OCI-LY7 (cell line): ENCODE measurements at regions of chr10 and their contacts with region 1.

Region 1: GRCh38 chr10:12484941-12485805 is 135.8 kb downstream of the CAMK1D start:
- DNase-seq: peak; percentile 86
- H3K4me3 ChIP-seq: peak overlapping the region; percentile 62
- H3K27ac ChIP-seq: peak overlapping the region; percentile 87
- H3K4me1 ChIP-seq: peaks cover 39% of the 10 kb centered on the region
- CTCF ChIP-seq: peak; percentile 78

Region 2: DNA sequence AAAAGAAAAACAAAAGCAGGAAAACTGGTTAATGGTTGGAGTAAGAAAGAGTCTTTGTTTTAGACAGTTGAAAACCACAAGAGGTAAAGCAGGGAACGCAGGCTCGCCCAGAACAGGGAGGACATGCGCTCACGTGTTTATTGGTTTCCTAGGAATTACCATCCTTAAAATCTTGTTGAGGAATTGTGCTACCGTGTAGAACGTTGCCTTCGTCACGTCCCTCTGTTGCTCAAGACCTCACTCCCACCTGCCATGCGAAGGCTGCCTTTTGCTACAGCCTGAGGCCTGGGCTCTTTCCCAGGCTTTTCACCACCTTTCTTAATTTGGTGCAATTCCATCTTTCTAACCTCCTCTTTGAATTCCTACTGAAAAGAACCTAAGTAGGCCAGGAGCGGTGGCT is 197.4 kb before region 1 on chr10:
- CTCF ChIA-PET with region 1: no interaction called
- POLR2A ChIA-PET with region 1: no interaction called
- intact Hi-C with region 1: no loop called
- DNase-seq: no peak
- H3K4me3 ChIP-seq: no peak overlapping the region
- H3K27ac ChIP-seq: no peak overlapping the region
- H3K4me1 ChIP-seq: no peaks in the 10 kb centered on the region
- CTCF ChIP-seq: no peak

Region 3: GRCh38 chr10:12340371-12340770 is 144.8 kb before region 1 on chr10:
- CTCF ChIA-PET with region 1: interaction called, 4 read pairs
- POLR2A ChIA-PET with region 1: interaction called, 4 read pairs
- intact Hi-C with region 1: loop called (anchors 2 kb)
- DNase-seq: peak; percentile 61
- H3K4me3 ChIP-seq: peak overlapping the region; percentile 52
- H3K27ac ChIP-seq: peak overlapping the region; percentile 100
- H3K4me1 ChIP-seq: peaks cover 74% of the 10 kb centered on the region
- CTCF ChIP-seq: no peak

Region 4: GRCh38 chr10:12348870-12349628 is 136.1 kb before region 1 on chr10 and contains the start of gene CAMK1D:
- CTCF ChIA-PET with region 1: interaction called, 6 read pairs
- POLR2A ChIA-PET with region 1: interaction called, 3 read pairs
- intact Hi-C with region 1: loop called (anchors 1 kb)
- DNase-seq: peak; percentile 90
- H3K4me3 ChIP-seq: peak within 1 kb of the TSS; percentile 84
- H3K27ac ChIP-seq: peak within 1 kb of the TSS; percentile 80
- H3K4me1 ChIP-seq: peaks cover 55% of the 10 kb centered on the region
- CTCF ChIP-seq: peak; percentile 52
- total RNA-seq, gene CAMK1D: 17.8 and 19.0 TPM in 2 replicates

Region 5: GRCh38 chr10:12656518-12657142 is 171.5 kb after region 1 on chr10:
- CTCF ChIA-PET with region 1: interaction called, 3 read pairs
- POLR2A ChIA-PET with region 1: interaction called, 5 read pairs
- intact Hi-C with region 1: loop called (anchors 5 kb)
- DNase-seq: peak; percentile 72
- H3K4me3 ChIP-seq: no peak overlapping the region
- H3K27ac ChIP-seq: no peak overlapping the region
- H3K4me1 ChIP-seq: no peaks in the 10 kb centered on the region
- CTCF ChIP-seq: peak; percentile 94